Caco-2 (cell line): ENCODE measurements at regions of chr1 and their contacts with region 1.

Region 1: GRCh38 chr1:241640029-241640818 is at the starts of genes CHML and OPN3:
- DNase-seq: peak; percentile 92 to 96
- H3K4me3 ChIP-seq: peak within 1 kb of the TSS; percentile 97
- H3K4me3 Mint-ChIP-seq: peak within 1 kb of the TSS; percentile 83
- H3K27ac Mint-ChIP-seq: peak within 1 kb of the TSS; percentile 89
- H3K4me1 ChIP-seq: peaks cover 56% of the 10 kb centered on the region
- H3K4me1 Mint-ChIP-seq: peaks cover 47% of the 10 kb centered on the region
- H3K27me3 ChIP-seq: no peaks in the 10 kb centered on the region
- H3K27me3 Mint-ChIP-seq: no peaks in the 10 kb centered on the region
- CTCF ChIP-seq: no peak
- total RNA-seq, gene CHML: 27.0 and 29.2 TPM in 2 replicates
- total RNA-seq, gene OPN3: 6.9 and 7.8 TPM in 2 replicates

Region 2: DNA sequence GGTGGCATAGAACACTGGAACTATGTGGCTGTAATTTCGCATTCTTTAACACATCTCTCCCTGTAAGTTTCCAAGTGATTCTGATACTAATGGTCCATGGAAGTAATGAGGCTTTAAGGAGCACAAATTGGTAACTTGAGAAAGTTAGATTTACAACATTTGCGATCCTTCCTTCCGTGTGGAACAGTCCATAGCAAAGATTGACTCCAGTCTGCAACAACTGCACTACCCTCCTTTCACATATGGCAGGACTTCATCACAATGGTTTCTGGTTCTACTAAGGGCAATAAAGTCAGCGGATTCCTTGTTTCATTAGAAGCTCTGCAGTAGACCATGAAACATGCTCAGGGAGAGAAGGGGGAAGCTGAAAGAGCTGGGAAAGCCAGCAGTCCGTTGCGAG is 544.4 kb before region 1 on chr1:
- CTCF ChIA-PET with region 1: no interaction called
- POLR2A ChIA-PET with region 1: no interaction called
- intact Hi-C with region 1: loop called (anchors 2 kb)
- DNase-seq: no peak
- H3K4me3 ChIP-seq: no peak overlapping the region
- H3K4me3 Mint-ChIP-seq: no peak overlapping the region
- H3K27ac Mint-ChIP-seq: no peak overlapping the region
- H3K4me1 ChIP-seq: 0 out of 2 replicates have a peak, but pooled peaks cover 5% of the 10 kb centered on the region
- H3K4me1 Mint-ChIP-seq: no peaks in the 10 kb centered on the region
- H3K27me3 ChIP-seq: no peaks in the 10 kb centered on the region
- H3K27me3 Mint-ChIP-seq: no peaks in the 10 kb centered on the region
- CTCF ChIP-seq: no peak

Region 3: DNA sequence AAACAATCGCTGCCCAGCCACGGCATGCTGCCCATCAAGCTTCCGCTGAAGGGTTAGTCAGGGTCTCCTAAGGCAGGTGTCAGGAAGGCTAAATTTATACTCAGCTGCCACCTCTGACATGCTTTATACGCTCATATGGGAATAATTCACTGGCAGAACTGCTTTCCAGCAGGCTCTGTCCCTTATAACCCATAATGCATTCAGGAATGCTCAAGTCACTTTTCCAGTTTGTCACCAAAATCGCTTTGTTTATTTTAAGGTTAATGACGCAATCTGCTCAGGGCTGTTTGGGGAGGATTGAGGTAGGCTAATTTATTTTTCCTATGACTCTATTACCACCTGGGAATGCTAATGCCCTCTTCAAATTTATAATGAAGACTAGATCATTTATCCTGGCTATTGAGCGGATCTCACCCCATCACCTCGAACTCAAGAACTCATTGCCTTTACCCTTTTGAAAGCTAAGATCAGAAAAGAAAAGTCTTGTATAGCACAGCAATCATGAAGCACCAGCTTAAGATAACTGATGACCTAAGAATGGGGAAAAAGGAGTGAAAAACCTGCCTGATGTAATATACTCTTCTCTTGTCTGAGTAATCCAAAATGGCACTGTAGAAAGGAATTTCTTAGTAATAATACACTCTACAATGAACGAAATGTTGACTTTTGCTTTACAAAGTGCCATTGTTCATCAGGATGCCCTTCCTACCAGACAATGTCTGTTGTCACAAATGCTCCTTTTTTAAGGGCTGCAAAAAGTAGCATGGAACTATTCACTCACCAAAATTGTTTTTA is 109.9 kb after region 1 on chr1:
- CTCF ChIA-PET with region 1: no interaction called
- POLR2A ChIA-PET with region 1: no interaction called
- intact Hi-C with region 1: loop called (anchors 10 kb)
- DNase-seq: peak in 1 of 2 experiments; percentile 47
- H3K4me3 ChIP-seq: no peak overlapping the region
- H3K4me3 Mint-ChIP-seq: peak overlapping the region; percentile 65
- H3K27ac Mint-ChIP-seq: peak overlapping the region; percentile 10
- H3K4me1 ChIP-seq: peaks cover 15% of the 10 kb centered on the region
- H3K4me1 Mint-ChIP-seq: peaks cover 15% of the 10 kb centered on the region
- H3K27me3 ChIP-seq: no peaks in the 10 kb centered on the region
- H3K27me3 Mint-ChIP-seq: no peaks in the 10 kb centered on the region
- CTCF ChIP-seq: no peak

Region 4: GRCh38 chr1:241847796-241848685 is 207.8 kb after region 1 on chr1 and contains the start of gene EXO1:
- CTCF ChIA-PET with region 1: no interaction called
- POLR2A ChIA-PET with region 1: no interaction called
- intact Hi-C with region 1: loop called (anchors 5 kb)
- DNase-seq: peak; percentile 86 to 87
- H3K4me3 ChIP-seq: peak within 1 kb of the TSS; percentile 99
- H3K4me3 Mint-ChIP-seq: peak within 1 kb of the TSS; percentile 98
- H3K27ac Mint-ChIP-seq: peak within 1 kb of the TSS; percentile 97
- H3K4me1 ChIP-seq: no peaks in the 10 kb centered on the region; the same call in 1 of the 2 replicates
- H3K4me1 Mint-ChIP-seq: peaks cover 6% of the 10 kb centered on the region
- H3K27me3 ChIP-seq: no peaks in the 10 kb centered on the region
- H3K27me3 Mint-ChIP-seq: peaks cover 5% of the 10 kb centered on the region
- CTCF ChIP-seq: peak in 1 of 2 experiments; percentile 38
- total RNA-seq, gene EXO1: 18.5 and 19.6 TPM in 2 replicates

Region 5: GRCh38 chr1:241870746-241871430 is 230.7 kb after region 1 on chr1:
- CTCF ChIA-PET with region 1: no interaction called
- POLR2A ChIA-PET with region 1: interaction called, 10 read pairs
- intact Hi-C with region 1: no loop called
- DNase-seq: no peak
- H3K4me3 ChIP-seq: no peak overlapping the region
- H3K4me3 Mint-ChIP-seq: no peak overlapping the region
- H3K27ac Mint-ChIP-seq: no peak overlapping the region
- H3K4me1 ChIP-seq: no peaks in the 10 kb centered on the region
- H3K4me1 Mint-ChIP-seq: no peaks in the 10 kb centered on the region
- H3K27me3 ChIP-seq: no peaks in the 10 kb centered on the region
- H3K27me3 Mint-ChIP-seq: no peaks in the 10 kb centered on the region
- CTCF ChIP-seq: no peak